CD4-positive, alpha-beta memory T cell (primary cell): ENCODE measurements at regions of chr17 and their contacts with region 1.

Region 1: DNA sequence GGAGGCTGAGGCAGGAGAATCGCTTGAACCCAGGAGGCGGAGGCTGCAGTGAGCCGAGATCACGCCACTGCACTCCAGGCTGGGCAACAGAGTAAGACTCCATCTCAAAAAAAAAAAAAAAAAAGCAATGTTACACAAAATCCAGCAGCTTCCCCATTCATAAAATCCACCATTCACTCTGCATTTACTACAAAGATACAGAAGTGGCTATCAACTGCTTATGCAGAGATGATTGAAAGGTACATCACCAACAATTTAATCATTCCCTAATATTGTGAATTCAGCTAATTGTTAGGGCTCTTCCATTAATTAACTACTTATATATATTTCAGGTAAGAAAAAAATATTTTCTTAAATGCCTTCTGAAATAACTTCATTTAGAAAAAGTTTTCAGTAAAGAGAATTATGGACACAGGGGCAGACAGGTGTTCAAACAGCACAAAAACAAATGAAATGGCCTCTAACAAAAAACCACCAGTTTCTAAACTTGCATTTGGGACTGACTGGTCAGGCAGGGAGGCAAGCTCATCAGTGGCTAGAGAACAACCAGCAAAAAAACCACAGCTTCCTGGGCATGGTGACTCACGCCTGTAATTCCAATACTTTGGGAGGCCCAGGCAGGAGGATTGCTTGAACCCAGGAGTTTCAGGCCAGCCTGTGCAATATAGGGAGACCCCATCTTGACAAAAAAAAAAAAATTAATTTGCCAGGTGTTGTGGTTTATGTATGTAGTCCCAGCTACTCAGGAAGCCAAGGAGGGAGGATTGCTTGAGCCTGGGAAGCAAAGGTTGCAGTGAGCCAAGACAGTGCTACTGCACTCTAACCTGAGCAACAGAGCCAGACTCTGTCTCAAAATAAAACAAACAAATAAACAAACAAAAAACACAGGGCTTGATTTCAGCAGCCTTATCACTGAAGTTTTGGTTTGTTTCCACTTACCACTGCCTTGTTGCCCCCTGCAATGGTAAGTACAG is 26.3 kb downstream of the ERN1 start:
- DNase-seq: no peak
- H3K4me3 ChIP-seq: no peak overlapping the region
- H3K4me3 Mint-ChIP-seq: peak overlapping the region in 7 of 8 donors; percentile 7 to 65 (median 21)
- H3K27ac ChIP-seq: no peak overlapping the region
- H3K27ac Mint-ChIP-seq: peak overlapping the region in 5 of 7 donors; percentile 12 to 73 (median 36)
- H3K4me1 ChIP-seq: peaks cover 75% of the 10 kb centered on the region
- H3K4me1 Mint-ChIP-seq: peaks cover 52 to 92% (median 74%) of the 10 kb centered on the region in 4 donors
- H3K27me3 ChIP-seq: no peaks in the 10 kb centered on the region
- H3K27me3 Mint-ChIP-seq: no peaks in the 10 kb centered on the region

Region 2: DNA sequence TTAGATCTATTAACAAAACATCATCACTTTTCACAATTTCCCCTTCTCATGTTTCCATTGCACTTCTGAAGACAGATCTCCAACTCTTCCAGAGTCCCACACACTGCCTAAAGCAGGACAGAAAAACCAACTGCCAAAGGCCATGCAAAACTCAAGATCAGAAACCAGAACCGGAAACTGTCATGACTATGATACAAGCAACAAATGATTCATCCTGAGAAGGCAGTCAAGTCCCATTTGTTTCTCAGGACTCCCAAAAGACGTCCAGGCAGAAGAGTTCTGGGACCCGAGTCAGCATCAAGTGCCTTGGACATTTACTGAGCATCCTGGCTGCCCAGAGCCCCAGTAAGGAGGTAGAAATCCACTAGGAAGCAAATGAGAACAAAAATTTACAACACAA is 12.6 kb before region 1 on chr17:
- CTCF ChIA-PET with region 1: no interaction called
- POLR2A ChIA-PET with region 1: interaction called, 8 read pairs
- intact Hi-C with region 1: loop called (anchors 2 kb)
- DNase-seq: peak in 2 of 5 donors; percentile 17 to 22
- H3K4me3 ChIP-seq: no peak overlapping the region
- H3K4me3 Mint-ChIP-seq: peak overlapping the region in 7 of 8 donors; percentile 57 to 85 (median 76)
- H3K27ac ChIP-seq: peak overlapping the region; percentile 25
- H3K27ac Mint-ChIP-seq: peak overlapping the region; percentile 89 to 95 (median 93)
- H3K4me1 ChIP-seq: peaks cover 91% of the 10 kb centered on the region
- H3K4me1 Mint-ChIP-seq: peaks cover 59 to 91% (median 76%) of the 10 kb centered on the region in 4 donors
- H3K27me3 ChIP-seq: no peaks in the 10 kb centered on the region
- H3K27me3 Mint-ChIP-seq: no peaks in the 10 kb centered on the region

Region 3: GRCh38 chr17:64117981-64118979 is 14.6 kb after region 1 on chr17:
- CTCF ChIA-PET with region 1: interaction called, 3 read pairs
- POLR2A ChIA-PET with region 1: interaction called, 10 read pairs
- intact Hi-C with region 1: no loop called
- DNase-seq: no peak
- H3K4me3 ChIP-seq: no peak overlapping the region
- H3K4me3 Mint-ChIP-seq: peak overlapping the region in 3 of 8 donors; percentile 21 to 63 (median 54)
- H3K27ac ChIP-seq: no peak overlapping the region
- H3K27ac Mint-ChIP-seq: peak overlapping the region in 5 of 7 donors; percentile 10 to 71 (median 50)
- H3K4me1 ChIP-seq: peaks cover 84% of the 10 kb centered on the region
- H3K4me1 Mint-ChIP-seq: peaks cover 52 to 91% (median 69%) of the 10 kb centered on the region in 4 donors
- H3K27me3 ChIP-seq: no peaks in the 10 kb centered on the region
- H3K27me3 Mint-ChIP-seq: no peaks in the 10 kb centered on the region